ENCODE measurements at regions of chr6 and their contacts with region 1.

Region 1: DNA sequence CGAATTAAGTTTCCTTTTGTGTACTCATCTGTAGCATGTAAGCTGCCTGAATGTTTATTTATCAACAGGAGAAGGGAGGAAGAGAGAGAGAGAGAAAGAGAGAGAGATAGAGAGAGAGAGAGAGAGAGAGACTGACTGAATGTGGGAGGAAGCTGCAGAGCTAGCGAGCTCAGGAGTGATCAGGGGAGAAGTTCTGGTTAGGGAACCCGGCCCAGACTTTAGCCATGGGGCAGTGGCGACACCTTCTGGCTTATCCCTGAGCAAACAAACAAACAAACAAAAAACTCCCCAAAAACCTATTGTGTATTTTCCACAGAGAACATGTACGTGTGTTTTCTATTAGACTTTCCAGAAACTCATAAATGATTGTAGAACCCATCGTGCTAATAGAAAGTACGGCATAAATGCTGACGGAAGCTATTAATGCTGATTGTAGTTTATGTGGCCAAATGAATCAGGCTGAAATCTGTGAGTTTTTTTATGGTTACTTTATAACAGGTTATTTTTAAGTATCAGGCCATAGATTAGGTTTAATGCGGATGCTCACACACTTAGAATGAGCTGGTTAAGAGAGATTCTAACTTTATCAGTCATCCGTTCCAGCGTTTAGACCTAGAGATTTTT is 92.8 kb downstream of the CLIC5 start:
- DNase-seq: peak; percentile 83
- H3K4me3 Mint-ChIP-seq: no peak overlapping the region
- H3K27ac Mint-ChIP-seq: peak overlapping the region; percentile 71
- H3K4me1 Mint-ChIP-seq: peaks cover 34% of the 10 kb centered on the region
- H3K27me3 Mint-ChIP-seq: peaks cover 12% of the 10 kb centered on the region

Region 2: GRCh38 chr6:44655412-44656342 is 1267.2 kb before region 1 on chr6:
- CTCF ChIA-PET with region 1: interaction called, 42 read pairs
- intact Hi-C with region 1: loop called (anchors 1 kb)
- DNase-seq: peak; percentile 81
- H3K4me3 Mint-ChIP-seq: peak overlapping the region; percentile 38
- H3K27ac Mint-ChIP-seq: peak overlapping the region; percentile 62
- H3K4me1 Mint-ChIP-seq: peaks cover 10% of the 10 kb centered on the region
- H3K27me3 Mint-ChIP-seq: no peaks in the 10 kb centered on the region

Region 3: DNA sequence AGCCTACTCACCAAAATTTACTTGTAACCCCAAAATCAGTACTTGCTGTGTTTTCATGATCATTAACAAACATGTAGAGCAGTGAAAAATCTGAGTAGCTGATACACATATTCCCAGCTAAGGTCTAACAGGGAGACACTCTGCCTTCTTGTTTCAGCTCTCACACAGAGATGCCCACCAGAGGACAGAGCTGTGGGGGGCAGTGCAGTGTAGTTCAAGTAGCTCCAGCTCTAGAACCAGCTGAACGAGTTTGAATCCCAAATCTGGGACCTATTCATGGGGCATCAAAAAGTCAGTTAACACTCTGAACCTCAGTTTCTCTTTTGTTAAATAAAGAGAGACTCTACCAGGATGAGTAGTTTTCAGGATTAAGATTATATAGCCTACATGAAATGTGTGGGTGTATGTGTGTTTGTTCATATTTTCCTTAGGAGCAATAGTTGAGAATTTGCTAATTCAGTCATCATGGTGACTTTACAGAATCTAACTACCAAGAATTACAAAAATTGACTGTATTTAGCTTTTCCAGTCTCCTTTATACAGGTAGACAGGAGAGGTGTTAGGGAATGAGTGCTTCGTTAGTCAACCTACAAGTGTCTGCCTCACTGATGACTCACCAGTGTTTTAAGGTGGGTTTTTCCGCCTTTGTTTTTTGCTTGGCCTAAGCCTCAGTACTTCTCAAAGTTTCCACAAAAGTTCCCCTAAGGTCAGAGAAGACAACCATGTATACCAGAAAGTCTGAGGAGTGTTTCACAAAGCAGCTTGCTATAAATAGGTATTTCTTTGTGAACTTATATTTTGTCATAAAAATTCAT is 758.7 kb before region 1 on chr6:
- CTCF ChIA-PET with region 1: no interaction called
- intact Hi-C with region 1: loop called (anchors 2 kb)
- DNase-seq: peak; percentile 72
- H3K4me3 Mint-ChIP-seq: peak overlapping the region; percentile 17
- H3K27ac Mint-ChIP-seq: peak overlapping the region; percentile 93
- H3K4me1 Mint-ChIP-seq: peaks cover 63% of the 10 kb centered on the region
- H3K27me3 Mint-ChIP-seq: no peaks in the 10 kb centered on the region

Region 4: GRCh38 chr6:45479834-45480751 is 442.7 kb before region 1 on chr6:
- CTCF ChIA-PET with region 1: interaction called, 3 read pairs
- intact Hi-C with region 1: loop called (anchors 2 kb)
- DNase-seq: no peak
- H3K4me3 Mint-ChIP-seq: no peak overlapping the region
- H3K27ac Mint-ChIP-seq: no peak overlapping the region
- H3K4me1 Mint-ChIP-seq: peaks cover 15% of the 10 kb centered on the region
- H3K27me3 Mint-ChIP-seq: no peaks in the 10 kb centered on the region

Region 5: DNA sequence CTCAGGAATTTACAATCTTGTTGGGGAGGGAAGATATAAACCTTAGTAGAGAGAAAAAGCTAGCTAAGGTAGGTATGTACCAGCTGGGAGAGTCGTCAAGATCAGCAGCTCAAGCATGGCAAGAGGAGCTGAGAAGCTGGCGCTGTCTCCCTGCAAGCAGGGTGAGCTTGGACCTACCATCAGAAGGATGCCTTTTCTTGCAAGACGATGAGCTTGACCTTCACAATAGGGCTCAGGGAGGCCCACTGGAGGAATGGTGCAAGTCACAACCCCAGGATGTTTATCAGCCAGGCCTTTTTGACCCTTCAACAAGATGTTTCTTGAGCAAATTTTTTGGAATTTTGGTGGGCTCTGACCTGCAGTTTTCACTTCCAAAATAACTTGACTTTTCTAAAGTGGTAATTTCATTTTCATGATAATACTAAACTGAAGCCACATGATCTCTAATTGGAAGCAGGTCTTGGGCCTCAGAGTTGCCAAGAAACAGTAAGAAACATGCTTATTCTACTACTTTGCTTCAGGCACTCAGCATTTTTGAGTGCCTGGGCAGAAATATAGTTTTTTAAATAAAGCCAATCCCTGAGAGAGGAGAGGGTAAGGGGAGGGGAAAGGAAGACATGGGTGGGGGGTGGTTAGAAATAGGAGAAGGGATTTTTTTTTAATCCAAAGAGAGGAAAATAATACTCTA is 165.3 kb before region 1 on chr6:
- CTCF ChIA-PET with region 1: no interaction called
- intact Hi-C with region 1: no loop called
- DNase-seq: no peak
- H3K4me3 Mint-ChIP-seq: no peak overlapping the region
- H3K27ac Mint-ChIP-seq: no peak overlapping the region
- H3K4me1 Mint-ChIP-seq: no peaks in the 10 kb centered on the region
- H3K27me3 Mint-ChIP-seq: peaks cover 9% of the 10 kb centered on the region

Region 6: GRCh38 chr6:45789238-45789637 is 133.6 kb before region 1 on chr6:
- CTCF ChIA-PET with region 1: no interaction called
- intact Hi-C with region 1: loop called (anchors 1 kb)
- DNase-seq: no peak
- H3K4me3 Mint-ChIP-seq: no peak overlapping the region
- H3K27ac Mint-ChIP-seq: no peak overlapping the region
- H3K4me1 Mint-ChIP-seq: peaks cover 3% of the 10 kb centered on the region
- H3K27me3 Mint-ChIP-seq: peaks cover 2% of the 10 kb centered on the region

Region 7: DNA sequence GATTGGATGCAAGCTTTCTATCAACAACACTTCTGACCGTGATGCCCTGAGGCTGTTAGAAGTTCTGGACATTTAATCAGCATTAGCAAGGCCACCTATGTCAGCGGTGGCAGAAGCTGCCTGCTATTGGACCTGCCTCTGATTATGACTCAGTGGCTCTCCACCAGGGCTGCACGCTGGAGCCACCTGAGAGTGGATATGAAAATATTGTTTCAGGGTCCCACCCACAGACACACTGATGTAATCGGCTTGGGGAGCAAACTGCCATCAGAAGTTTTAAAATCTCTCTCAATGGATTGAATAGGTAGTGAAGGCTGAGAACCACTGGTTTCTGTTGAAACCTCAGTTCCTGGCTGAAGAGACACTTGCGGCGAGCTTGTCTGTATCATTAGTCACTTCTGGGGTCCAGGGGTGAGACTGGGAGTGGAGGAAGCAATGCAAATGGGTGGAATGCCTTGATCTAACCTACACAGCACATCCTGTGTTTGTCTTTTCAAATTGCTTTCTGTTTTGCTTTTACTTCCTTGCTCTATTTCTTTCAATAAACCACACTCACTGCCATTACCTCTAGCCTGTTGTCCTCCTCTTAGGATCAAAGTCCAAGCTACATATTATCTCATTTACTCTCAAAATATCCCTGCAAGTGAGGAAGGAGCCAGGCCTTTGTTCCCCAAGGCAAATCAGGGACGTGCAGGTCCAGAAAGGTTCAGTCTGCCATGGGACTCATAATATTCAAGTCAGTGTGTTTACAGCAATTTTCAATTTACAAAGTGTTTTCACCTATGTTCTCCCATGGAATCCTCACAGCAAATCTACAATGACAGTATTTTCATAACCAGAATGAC is 88.6 kb after region 1 on chr6:
- CTCF ChIA-PET with region 1: interaction called, 4 read pairs
- intact Hi-C with region 1: loop called (anchors 1 kb)
- DNase-seq: peak; percentile 78
- H3K4me3 Mint-ChIP-seq: no peak overlapping the region
- H3K27ac Mint-ChIP-seq: peak overlapping the region; percentile 72
- H3K4me1 Mint-ChIP-seq: peaks cover 45% of the 10 kb centered on the region
- H3K27me3 Mint-ChIP-seq: peaks cover 6% of the 10 kb centered on the region

Region 8: DNA sequence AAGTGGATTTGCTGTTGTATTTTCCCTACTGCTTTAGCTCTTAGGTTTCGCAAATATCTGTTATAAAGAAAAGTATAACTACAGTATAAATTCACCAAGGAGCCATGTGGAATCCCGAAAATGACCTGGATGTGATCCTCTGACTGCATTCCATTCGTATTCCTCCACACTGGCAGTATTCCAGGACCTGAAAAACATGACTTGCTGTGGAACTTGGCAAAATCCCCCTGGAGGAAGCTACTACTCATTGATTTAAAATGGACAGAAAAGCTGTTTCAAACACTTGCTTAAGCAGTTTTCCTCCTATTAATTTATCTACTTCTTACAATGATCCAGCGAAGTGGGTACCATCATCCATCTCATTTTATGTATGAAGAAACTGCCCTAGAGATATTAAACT is 261.3 kb after region 1 on chr6:
- CTCF ChIA-PET with region 1: no interaction called
- intact Hi-C with region 1: no loop called
- DNase-seq: no peak
- H3K4me3 Mint-ChIP-seq: no peak overlapping the region
- H3K27ac Mint-ChIP-seq: no peak overlapping the region
- H3K4me1 Mint-ChIP-seq: no peaks in the 10 kb centered on the region
- H3K27me3 Mint-ChIP-seq: peaks cover 17% of the 10 kb centered on the region

Region 9: DNA sequence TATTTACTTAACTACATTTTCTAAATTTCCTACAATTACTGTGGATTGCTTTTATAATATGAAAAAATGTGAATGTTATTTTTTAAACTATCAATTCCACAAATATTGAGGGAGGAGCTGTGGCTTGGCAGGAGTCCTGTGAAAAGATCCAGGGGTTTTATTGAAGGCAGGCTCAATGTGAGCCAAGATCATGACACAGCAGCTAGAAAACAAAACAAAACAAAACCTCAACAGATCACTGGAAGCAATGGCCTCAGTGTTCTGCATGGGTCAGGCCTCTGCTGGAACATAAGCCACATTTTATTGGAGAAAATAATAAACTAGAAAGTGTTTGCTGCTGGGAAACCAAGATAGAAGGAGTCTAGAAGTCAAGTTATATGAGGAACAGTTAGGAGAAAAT is 587.8 kb after region 1 on chr6:
- CTCF ChIA-PET with region 1: no interaction called
- intact Hi-C with region 1: no loop called
- DNase-seq: no peak
- H3K4me3 Mint-ChIP-seq: no peak overlapping the region
- H3K27ac Mint-ChIP-seq: no peak overlapping the region
- H3K4me1 Mint-ChIP-seq: no peaks in the 10 kb centered on the region
- H3K27me3 Mint-ChIP-seq: peaks cover 4% of the 10 kb centered on the region

Measured in activated naive CD4-positive, alpha-beta T cell treated with anti-CD3 and anti-CD28 coated beads for 36 hours (primary cell).